T-cell (primary cell): ENCODE measurements at regions of chr11 and their contacts with region 1.

Region 1: DNA sequence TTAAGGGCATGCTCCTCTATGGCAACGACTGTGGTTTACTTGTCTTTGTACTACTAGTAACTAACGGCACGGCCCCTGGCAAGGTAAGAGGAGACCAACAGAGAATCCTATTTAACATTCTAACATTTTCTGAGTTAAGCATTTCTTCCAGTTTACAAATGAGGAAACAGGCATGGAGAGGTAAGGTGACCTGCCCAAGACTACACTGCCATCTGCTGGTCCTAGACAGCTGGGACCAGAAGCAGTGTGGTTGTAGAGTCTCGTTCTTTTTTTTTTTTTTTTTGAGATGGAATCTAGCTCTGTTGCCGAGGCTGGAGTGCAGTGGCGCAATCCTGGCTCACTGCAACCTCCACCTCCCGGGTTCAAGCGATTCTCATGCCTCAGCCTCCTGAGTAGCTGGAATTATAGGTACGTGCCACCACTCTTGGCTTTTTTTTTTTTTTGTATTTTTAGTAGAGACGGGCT is 5.3 kb upstream of the RAPSN start:
- DNase-seq: peak; percentile 21 to 83 (median 61)
- ATAC-seq: peak; percentile 84 to 95 (median 88)
- H3K4me3 ChIP-seq: no peak overlapping the region
- H3K4me3 Mint-ChIP-seq: no peak overlapping the region
- H3K27ac ChIP-seq: no peak overlapping the region
- H3K27ac Mint-ChIP-seq: no peak overlapping the region
- H3K4me1 ChIP-seq: peaks cover 0 to 4% of the 10 kb centered on the region in 2 experiments
- H3K4me1 Mint-ChIP-seq: peaks cover 4 to 5% (median 5%) of the 10 kb centered on the region in 3 donors
- H3K27me3 ChIP-seq: no peaks in the 10 kb centered on the region
- H3K27me3 Mint-ChIP-seq: no peaks in the 10 kb centered on the region

Region 2: DNA sequence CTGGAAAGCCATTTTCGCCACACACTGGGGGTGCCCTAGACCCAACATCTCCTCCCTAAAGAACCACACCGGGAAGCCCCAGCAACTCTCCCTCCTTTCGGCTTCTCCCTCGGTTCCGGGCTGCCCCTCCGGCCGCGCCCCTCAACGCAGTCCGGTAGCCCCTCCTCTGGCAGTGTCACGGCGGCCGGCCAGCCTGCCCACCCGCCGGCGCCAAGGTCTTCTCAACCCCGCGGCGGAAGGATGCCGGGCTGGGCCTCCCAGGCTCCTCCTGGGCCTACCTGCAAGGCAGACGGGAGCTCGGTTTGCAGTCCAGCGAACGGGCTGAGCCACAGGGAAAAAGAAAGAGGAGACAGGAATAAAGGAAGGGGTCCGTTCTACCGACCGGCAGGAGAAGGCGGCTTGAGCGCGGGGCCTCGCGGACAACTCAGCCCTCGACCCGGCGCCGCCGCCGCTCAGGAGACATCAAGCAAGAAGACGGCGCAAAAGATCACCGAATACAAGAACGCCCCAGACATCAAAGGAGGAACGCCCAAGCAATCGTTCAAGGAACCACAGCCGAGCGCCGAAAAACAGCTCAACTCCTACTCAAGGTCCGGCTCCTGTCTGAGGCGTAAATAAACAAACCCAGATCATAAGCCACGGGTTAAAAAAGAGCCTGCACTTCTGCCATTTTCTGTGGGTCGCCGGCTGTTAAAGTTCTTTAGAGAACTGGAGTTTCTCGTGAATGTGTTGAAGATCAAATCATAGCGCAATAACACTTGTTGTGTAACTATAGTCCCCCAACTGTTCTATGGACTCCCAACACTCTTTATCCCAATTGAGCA is 860.5 kb before region 1 on chr11 and contains the start of gene AMBRA1:
- CTCF ChIA-PET with region 1: no interaction called
- POLR2A ChIA-PET with region 1: interaction called in 1 of 2 experiments, 14 read pairs
- DNase-seq: peak; percentile 67 to 88 (median 75)
- ATAC-seq: peak; percentile 92 to 93 (median 92)
- H3K4me3 ChIP-seq: peak within 1 kb of the TSS; percentile 81 to 90
- H3K4me3 Mint-ChIP-seq: peak within 1 kb of the TSS; percentile 96 to 98 (median 96)
- H3K27ac ChIP-seq: peak within 1 kb of the TSS; percentile 30
- H3K27ac Mint-ChIP-seq: peak within 1 kb of the TSS; percentile 94
- H3K4me1 ChIP-seq: peaks cover 12 to 31% of the 10 kb centered on the region in 2 experiments
- H3K4me1 Mint-ChIP-seq: peaks cover 43 to 50% (median 45%) of the 10 kb centered on the region in 3 donors
- H3K27me3 ChIP-seq: no peaks in the 10 kb centered on the region
- H3K27me3 Mint-ChIP-seq: no peaks in the 10 kb centered on the region
- total RNA-seq, gene AMBRA1: 35.5 to 49.7 (median 42.7) TPM

Region 3: DNA sequence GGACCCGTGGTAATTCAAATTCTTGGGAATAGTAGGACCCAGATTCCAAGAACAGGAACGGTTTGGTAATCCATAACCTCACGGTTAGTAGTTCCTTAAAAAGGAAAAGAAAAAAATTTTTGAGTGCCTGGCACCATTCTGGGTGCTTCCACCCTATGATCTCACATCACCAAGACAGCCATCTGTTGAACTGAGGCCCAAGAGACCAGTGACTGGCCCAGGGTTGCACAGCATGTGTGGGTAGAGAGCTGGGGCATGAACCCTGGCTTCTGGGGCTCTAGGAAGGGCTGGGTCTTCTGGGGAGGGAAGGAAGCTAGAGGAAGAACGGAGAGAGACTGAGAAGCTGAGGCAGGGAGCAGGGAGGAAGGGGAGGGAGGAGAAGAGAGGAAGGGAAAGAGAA is 71.1 kb before region 1 on chr11:
- CTCF ChIA-PET with region 1: interaction called in 1 of 2 experiments, 10 read pairs
- POLR2A ChIA-PET with region 1: no interaction called
- DNase-seq: no peak
- ATAC-seq: no peak
- H3K4me3 ChIP-seq: no peak overlapping the region
- H3K4me3 Mint-ChIP-seq: no peak overlapping the region
- H3K27ac ChIP-seq: no peak overlapping the region
- H3K27ac Mint-ChIP-seq: no peak overlapping the region
- H3K4me1 ChIP-seq: peaks cover 0 to 9% of the 10 kb centered on the region in 2 experiments
- H3K4me1 Mint-ChIP-seq: peaks cover 0 to 6% (median 0%) of the 10 kb centered on the region in 3 donors
- H3K27me3 ChIP-seq: peaks cover 0 to 3% of the 10 kb centered on the region in 2 experiments
- H3K27me3 Mint-ChIP-seq: no peaks in the 10 kb centered on the region

Region 4: GRCh38 chr11:47688111-47688510 is 233.9 kb after region 1 on chr11:
- CTCF ChIA-PET with region 1: interaction called in 1 of 2 experiments, 10 read pairs
- POLR2A ChIA-PET with region 1: no interaction called
- DNase-seq: no peak
- ATAC-seq: no peak
- H3K4me3 ChIP-seq: no peak overlapping the region
- H3K4me3 Mint-ChIP-seq: no peak overlapping the region
- H3K27ac ChIP-seq: no peak overlapping the region
- H3K27ac Mint-ChIP-seq: no peak overlapping the region
- H3K4me1 ChIP-seq: no peaks in the 10 kb centered on the region
- H3K4me1 Mint-ChIP-seq: peaks cover 5 to 8% (median 5%) of the 10 kb centered on the region in 3 donors
- H3K27me3 ChIP-seq: no peaks in the 10 kb centered on the region
- H3K27me3 Mint-ChIP-seq: no peaks in the 10 kb centered on the region